BJ (cell line): ENCODE measurements at regions of chr7 and their contacts with region 1.

Region 1: DNA sequence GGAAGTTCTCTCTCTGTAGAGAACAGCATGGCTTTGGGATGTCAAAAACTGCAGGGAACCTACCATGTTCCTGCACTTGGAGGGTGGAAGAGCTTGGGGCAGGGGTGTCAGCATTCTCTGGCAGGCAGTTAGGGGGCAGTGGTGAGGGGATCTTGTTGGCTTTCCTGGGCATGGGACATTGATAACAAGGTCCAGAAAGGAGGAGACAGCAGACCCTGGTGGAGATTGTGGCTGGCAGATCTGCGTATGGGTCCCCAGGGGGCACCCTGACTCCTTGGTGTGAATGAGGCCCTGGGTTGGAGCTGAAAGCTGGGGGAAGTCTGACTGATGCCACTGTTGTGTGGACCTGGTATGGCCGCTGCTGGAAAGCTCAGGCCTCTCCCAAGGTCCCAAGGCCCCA is 22.9 kb upstream of the CAMK2B start:
- DNase-seq: no peak
- H3K4me3 ChIP-seq: no peak overlapping the region
- H3K27me3 ChIP-seq: peaks cover 3% of the 10 kb centered on the region
- CTCF ChIP-seq: peak; percentile 68

Region 2: DNA sequence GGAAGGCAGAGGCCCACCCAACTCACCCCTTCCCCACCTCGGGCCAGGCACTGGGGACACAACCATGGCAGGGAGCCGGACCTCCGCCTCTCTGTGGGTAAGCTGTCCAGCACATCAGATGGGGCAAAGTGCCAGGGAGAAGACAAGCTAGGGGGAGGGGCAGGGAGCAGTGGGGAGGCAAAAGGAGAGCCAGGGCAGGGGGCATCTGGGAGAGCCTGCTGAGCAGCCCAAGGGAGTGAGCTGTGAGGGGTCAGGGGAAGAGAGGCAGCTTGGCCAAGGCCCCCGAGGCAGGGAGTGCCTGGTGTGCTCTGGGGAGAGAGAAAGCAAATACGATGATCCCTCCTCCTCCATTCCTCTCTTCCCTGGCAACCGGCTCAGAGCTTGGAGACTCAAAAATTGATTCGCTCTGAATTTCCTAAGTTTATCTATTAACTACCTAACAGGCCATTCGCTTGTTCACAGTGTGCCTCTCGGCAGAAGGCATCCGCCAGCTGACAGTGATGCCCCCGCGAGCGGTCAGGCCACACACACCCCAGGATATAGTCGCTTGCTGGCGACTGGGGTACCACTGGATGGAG is 27.4 kb before region 1 on chr7:
- CTCF ChIA-PET with region 1: interaction called, 13 read pairs
- POLR2A ChIA-PET with region 1: no interaction called
- DNase-seq: no peak
- H3K4me3 ChIP-seq: no peak overlapping the region
- H3K27me3 ChIP-seq: peaks cover 20% of the 10 kb centered on the region
- CTCF ChIP-seq: no peak

Region 3: GRCh38 chr7:44366986-44367385 is 18.7 kb after region 1 on chr7:
- CTCF ChIA-PET with region 1: interaction called, 13 read pairs
- POLR2A ChIA-PET with region 1: no interaction called
- DNase-seq: no peak
- H3K4me3 ChIP-seq: no peak overlapping the region
- H3K27me3 ChIP-seq: no peaks in the 10 kb centered on the region
- CTCF ChIP-seq: no peak

Region 4: DNA sequence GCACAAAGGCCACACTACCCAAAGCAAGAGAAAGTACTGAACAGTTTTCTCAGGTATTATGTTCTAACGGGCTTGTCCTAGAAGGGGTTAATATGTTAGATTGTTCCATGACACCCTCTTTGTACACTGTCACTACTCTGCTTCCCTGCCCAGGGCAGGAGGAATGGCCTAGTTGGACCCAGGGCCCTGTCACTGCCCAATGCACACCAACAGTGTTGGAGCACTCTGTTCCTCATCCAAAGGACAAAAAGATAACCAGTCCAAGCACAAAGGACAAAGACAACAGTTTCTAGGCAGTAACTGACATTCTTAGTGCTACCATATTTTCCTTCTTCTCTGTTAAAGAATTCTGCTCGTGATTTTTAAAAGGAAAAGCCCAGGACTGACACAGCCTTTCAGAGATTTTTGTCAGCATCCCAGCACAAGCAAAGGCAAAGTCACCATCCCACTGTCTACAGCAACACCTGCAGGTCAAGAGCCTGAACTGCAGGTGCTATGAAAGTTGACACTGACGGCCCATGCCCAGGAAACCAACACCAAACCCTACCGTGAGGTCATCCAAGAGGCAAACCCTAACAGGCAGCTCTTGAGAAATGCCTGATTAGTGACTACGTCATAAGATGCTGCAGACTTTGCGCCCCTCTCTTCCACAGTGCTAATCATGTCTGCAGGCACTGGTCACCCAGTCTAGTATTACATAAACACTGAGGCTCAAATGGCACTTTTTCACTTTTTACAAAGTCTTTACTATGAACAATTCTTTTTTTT is 128.9 kb after region 1 on chr7:
- CTCF ChIA-PET with region 1: interaction called, 20 read pairs
- POLR2A ChIA-PET with region 1: no interaction called
- DNase-seq: no peak
- H3K4me3 ChIP-seq: no peak overlapping the region
- H3K27me3 ChIP-seq: no peaks in the 10 kb centered on the region
- CTCF ChIP-seq: peak; percentile 97

Region 5: GRCh38 chr7:44547536-44548231 is 199.4 kb after region 1 on chr7:
- CTCF ChIA-PET with region 1: no interaction called
- POLR2A ChIA-PET with region 1: no interaction called
- DNase-seq: no peak
- H3K4me3 ChIP-seq: no peak overlapping the region
- H3K27me3 ChIP-seq: peaks cover 6% of the 10 kb centered on the region; the same call in 1 of the 2 replicates
- CTCF ChIP-seq: no peak